ENCODE measurements at regions of chr2 and their contacts with region 1.

Region 1: DNA sequence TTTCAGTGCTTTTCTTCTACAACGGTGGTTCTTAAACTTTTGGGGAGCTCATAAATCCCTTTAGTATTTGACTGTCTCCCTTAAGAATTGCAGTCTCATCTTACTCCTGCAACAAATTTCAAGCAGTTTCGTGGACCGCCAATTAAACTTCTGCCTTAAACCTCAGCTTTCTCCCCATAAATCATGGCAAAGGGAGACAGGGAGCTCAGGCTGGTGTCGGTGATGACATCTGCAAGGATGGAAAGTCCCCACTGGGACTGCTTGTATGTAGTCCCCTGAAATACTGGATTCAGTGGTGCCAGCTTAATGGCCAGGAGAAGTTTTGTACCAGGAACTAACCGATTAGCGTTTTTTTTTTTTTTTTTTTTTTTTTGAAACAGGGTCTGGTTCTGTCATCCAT is 148.7 kb upstream of the ITGA6 start:
- DNase-seq: no peak
- ATAC-seq: no peak
- H3K4me3 ChIP-seq: no peak overlapping the region
- H3K27ac ChIP-seq: no peak overlapping the region
- H3K4me1 ChIP-seq: no peaks in the 10 kb centered on the region
- H3K27me3 ChIP-seq: no peaks in the 10 kb centered on the region; the same call in 1 of the 2 replicates
- CTCF ChIP-seq: no peak

Region 2: DNA sequence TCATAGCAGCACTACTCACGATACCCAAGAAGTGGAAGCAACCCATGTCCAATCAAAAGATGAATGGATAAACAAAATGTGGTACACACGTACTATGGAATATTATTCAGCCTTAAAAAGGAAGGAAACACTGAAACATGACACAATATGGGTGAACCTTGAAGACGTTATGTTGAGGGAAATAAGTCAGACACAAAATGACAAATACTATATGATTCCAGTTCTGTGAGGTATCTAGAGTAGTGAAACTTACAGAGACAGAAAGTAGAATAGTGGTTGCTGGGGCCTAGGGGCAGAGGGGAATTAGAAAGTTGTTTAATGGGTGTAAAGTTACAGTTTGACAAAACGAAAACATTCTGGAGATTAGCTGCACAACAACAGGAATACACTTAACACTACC is 1142.6 kb before region 1 on chr2:
- CTCF ChIA-PET with region 1: no interaction called
- POLR2A ChIA-PET with region 1: interaction called, 11 read pairs
- in situ Hi-C with region 1: no loop called
- intact Hi-C with region 1: no loop called
- DNase-seq: no peak
- ATAC-seq: no peak
- H3K4me3 ChIP-seq: no peak overlapping the region
- H3K27ac ChIP-seq: no peak overlapping the region
- H3K4me1 ChIP-seq: peaks cover 17% of the 10 kb centered on the region
- H3K27me3 ChIP-seq: no peaks in the 10 kb centered on the region
- CTCF ChIP-seq: no peak

Region 3: DNA sequence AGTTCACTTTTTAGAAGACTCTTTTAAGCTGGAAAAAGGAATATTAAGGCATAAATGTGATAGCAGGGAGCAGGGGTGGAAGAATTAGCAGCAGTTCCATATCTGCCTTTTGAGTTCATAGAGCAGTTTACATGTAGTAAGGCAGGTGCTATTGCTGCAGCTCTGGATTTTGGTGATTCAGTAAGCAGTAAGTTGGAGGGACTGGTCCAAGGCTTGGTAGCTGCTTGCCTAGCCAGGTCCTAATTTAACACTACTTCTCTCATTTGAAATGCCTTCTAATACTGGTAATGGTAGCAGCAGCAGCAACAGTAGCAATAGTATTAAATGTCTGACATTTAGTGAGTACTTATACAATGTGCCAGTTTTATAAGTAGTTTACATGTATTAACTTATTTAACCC is 326.4 kb before region 1 on chr2:
- CTCF ChIA-PET with region 1: no interaction called
- POLR2A ChIA-PET with region 1: no interaction called
- in situ Hi-C with region 1: no loop called
- intact Hi-C with region 1: no loop called
- DNase-seq: no peak
- ATAC-seq: no peak
- H3K4me3 ChIP-seq: no peak overlapping the region
- H3K27ac ChIP-seq: no peak overlapping the region
- H3K4me1 ChIP-seq: no peaks in the 10 kb centered on the region
- H3K27me3 ChIP-seq: no peaks in the 10 kb centered on the region
- CTCF ChIP-seq: no peak

Region 4: GRCh38 chr2:172134270-172134669 is 144.4 kb before region 1 on chr2:
- CTCF ChIA-PET with region 1: interaction called, 10 read pairs
- POLR2A ChIA-PET with region 1: no interaction called
- in situ Hi-C with region 1: no loop called
- intact Hi-C with region 1: no loop called
- DNase-seq: no peak
- ATAC-seq: no peak
- H3K4me3 ChIP-seq: no peak overlapping the region
- H3K27ac ChIP-seq: no peak overlapping the region
- H3K4me1 ChIP-seq: no peaks in the 10 kb centered on the region
- H3K27me3 ChIP-seq: no peaks in the 10 kb centered on the region; the same call in 1 of the 2 replicates
- CTCF ChIP-seq: peak; percentile 14; the same call in 1 of the 2 replicates

Region 5: DNA sequence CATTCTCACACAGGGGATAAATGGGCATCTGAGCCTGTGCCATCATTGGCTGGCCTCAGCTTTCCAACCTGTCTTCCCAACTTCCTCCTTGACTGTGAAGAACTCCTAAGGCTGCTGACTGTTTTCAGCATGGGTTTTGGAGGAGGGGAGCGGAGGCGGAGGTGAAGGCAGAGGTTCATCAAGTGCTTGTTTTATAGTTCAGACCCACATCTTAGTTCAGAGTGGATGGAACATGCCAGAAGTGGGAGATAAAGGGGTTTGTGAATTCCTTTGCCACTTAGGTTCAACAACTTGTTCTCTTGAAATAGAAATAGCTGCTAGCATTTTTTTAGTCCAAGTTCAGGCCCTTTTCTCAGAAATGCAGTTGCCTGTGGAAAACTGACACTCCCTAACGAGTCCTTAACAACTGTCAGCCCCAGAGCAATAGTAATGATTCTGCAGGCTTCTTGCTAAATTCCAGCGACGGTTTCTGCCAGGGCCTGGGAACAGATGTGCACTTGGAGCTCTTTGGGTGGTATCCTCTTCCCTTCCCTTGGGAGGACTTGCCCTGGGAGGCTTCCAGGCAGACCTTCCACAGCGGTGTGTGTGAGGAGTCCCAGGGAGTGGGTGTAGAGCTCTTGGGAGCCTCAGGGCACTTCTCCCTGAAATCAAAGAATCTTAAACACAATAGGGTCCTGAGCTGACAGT is 118.6 kb after region 1 on chr2:
- CTCF ChIA-PET with region 1: no interaction called
- POLR2A ChIA-PET with region 1: no interaction called
- in situ Hi-C with region 1: no loop called
- intact Hi-C with region 1: no loop called
- DNase-seq: no peak
- ATAC-seq: no peak
- H3K4me3 ChIP-seq: no peak overlapping the region
- H3K27ac ChIP-seq: no peak overlapping the region
- H3K4me1 ChIP-seq: no peaks in the 10 kb centered on the region
- H3K27me3 ChIP-seq: peaks cover 2% of the 10 kb centered on the region; the same call in 1 of the 2 replicates
- CTCF ChIP-seq: no peak

Region 6: GRCh38 chr2:173149491-173149890 is 870.8 kb after region 1 on chr2:
- CTCF ChIA-PET with region 1: no interaction called
- POLR2A ChIA-PET with region 1: interaction called, 11 read pairs
- in situ Hi-C with region 1: no loop called
- intact Hi-C with region 1: no loop called
- DNase-seq: no peak
- ATAC-seq: no peak
- H3K4me3 ChIP-seq: no peak overlapping the region
- H3K27ac ChIP-seq: peak overlapping the region; percentile 91
- H3K4me1 ChIP-seq: peaks cover 68% of the 10 kb centered on the region
- H3K27me3 ChIP-seq: no peaks in the 10 kb centered on the region
- CTCF ChIP-seq: no peak

Region 7: GRCh38 chr2:173286153-173286809 is 1007.6 kb after region 1 on chr2:
- CTCF ChIA-PET with region 1: no interaction called
- POLR2A ChIA-PET with region 1: interaction called, 11 read pairs
- in situ Hi-C with region 1: no loop called
- intact Hi-C with region 1: no loop called
- DNase-seq: no peak
- ATAC-seq: no peak
- H3K4me3 ChIP-seq: no peak overlapping the region
- H3K27ac ChIP-seq: no peak overlapping the region
- H3K4me1 ChIP-seq: no peaks in the 10 kb centered on the region
- H3K27me3 ChIP-seq: no peaks in the 10 kb centered on the region
- CTCF ChIP-seq: peak; percentile 57